ENCODE measurements at regions of chr7 and their contacts with region 1.

Region 1: GRCh38 chr7:131107337-131108211 is 220.1 kb upstream of the MKLN1 start:
- DNase-seq: peak; percentile 46 to 87
- H3K4me3 ChIP-seq: peak overlapping the region; percentile 81 to 99
- H3K27ac ChIP-seq: peak overlapping the region; percentile 96 to 100
- H3K4me1 ChIP-seq: peaks cover 0 to 14% of the 10 kb centered on the region in 2 donors
- H3K27me3 ChIP-seq: no peaks in the 10 kb centered on the region
- CTCF ChIP-seq: no peak

Region 2: GRCh38 chr7:130891254-130892094 is 216.1 kb before region 1 on chr7:
- intact Hi-C with region 1: loop called (anchors 2 kb)
- DNase-seq: peak in 1 of 2 donors; percentile 94
- H3K4me3 ChIP-seq: peak overlapping the region in 1 of 2 donors; percentile 49
- H3K27ac ChIP-seq: peak overlapping the region; percentile 95 to 97
- H3K4me1 ChIP-seq: peaks cover 16 to 56% of the 10 kb centered on the region in 2 donors
- H3K27me3 ChIP-seq: no peaks in the 10 kb centered on the region
- CTCF ChIP-seq: no peak

Region 3: GRCh38 chr7:131249003-131249402 is 141.4 kb after region 1 on chr7:
- intact Hi-C with region 1: loop called (anchors 5 kb)
- DNase-seq: peak; percentile 43 to 91
- H3K4me3 ChIP-seq: no peak overlapping the region
- H3K27ac ChIP-seq: no peak overlapping the region
- H3K4me1 ChIP-seq: peaks cover 0 to 7% of the 10 kb centered on the region in 2 donors
- H3K27me3 ChIP-seq: no peaks in the 10 kb centered on the region
- CTCF ChIP-seq: no peak

Region 4: GRCh38 chr7:131302876-131303707 is 195.5 kb after region 1 on chr7:
- intact Hi-C with region 1: loop called (anchors 5 kb)
- DNase-seq: no peak
- H3K4me3 ChIP-seq: no peak overlapping the region
- H3K27ac ChIP-seq: no peak overlapping the region
- H3K4me1 ChIP-seq: peaks cover 0 to 2% of the 10 kb centered on the region in 2 donors
- H3K27me3 ChIP-seq: no peaks in the 10 kb centered on the region
- CTCF ChIP-seq: peak; percentile 26 to 60 (median 40)

Region 5: GRCh38 chr7:131424219-131424822 is 316.7 kb after region 1 on chr7:
- intact Hi-C with region 1: loop called (anchors 5 kb)
- DNase-seq: no peak
- H3K4me3 ChIP-seq: no peak overlapping the region
- H3K27ac ChIP-seq: no peak overlapping the region
- H3K4me1 ChIP-seq: peaks cover 0 to 3% of the 10 kb centered on the region in 2 donors
- H3K27me3 ChIP-seq: no peaks in the 10 kb centered on the region
- CTCF ChIP-seq: peak; percentile 40 to 59 (median 43)